ENCODE measurements at regions of chr10 and their contacts with region 1.

Region 1: DNA sequence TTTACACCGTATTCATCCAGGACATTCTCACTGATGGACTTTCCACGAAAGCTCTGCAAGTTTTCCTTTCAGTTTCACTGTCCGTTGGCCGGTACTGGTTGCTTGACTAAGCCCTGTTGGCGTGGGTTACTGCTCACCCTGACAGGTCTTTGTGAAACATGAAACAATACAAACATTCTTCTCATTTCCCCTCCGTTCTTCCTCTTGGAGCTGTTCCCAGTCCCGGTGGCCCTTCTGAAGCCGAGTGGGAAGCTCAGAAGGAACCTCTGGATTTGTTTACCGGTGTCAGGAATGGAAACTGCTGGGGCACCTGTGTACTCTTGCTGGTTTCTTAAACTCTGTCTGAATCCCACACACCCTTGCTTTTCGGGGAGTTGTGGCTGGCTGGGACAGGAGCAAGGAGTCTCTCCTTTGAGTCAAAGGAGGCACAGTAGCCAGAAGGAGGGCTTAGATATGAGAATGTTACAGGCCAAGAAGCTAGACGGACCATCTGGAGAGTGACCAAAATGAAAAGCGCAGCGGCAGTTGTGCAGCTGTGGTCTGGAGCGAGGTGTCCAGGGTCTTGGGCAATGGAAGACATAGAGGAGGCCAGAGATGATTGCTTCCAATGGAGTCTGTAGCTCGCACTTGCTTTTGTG is 45.7 kb downstream of the LYZL2 start:
- DNase-seq: peak; percentile 74 to 89
- ATAC-seq: peak; percentile 91 to 94
- H3K4me3 ChIP-seq: peak overlapping the region; percentile 29
- H3K27ac ChIP-seq: peak overlapping the region; percentile 72 to 88
- H3K4me1 ChIP-seq: peaks cover 35% of the 10 kb centered on the region
- CTCF ChIP-seq: no peak
- EP300 ChIP-seq: peak in 1 of 2 experiments; percentile 64; a peak in 1 of 5 replicates
- POLR2A ChIP-seq: no peak
- RAD21 ChIP-seq: 0 out of 5 replicates have a peak, but pooled peaks of 1 of the 2 experiments have one; percentile 22

Region 2: DNA sequence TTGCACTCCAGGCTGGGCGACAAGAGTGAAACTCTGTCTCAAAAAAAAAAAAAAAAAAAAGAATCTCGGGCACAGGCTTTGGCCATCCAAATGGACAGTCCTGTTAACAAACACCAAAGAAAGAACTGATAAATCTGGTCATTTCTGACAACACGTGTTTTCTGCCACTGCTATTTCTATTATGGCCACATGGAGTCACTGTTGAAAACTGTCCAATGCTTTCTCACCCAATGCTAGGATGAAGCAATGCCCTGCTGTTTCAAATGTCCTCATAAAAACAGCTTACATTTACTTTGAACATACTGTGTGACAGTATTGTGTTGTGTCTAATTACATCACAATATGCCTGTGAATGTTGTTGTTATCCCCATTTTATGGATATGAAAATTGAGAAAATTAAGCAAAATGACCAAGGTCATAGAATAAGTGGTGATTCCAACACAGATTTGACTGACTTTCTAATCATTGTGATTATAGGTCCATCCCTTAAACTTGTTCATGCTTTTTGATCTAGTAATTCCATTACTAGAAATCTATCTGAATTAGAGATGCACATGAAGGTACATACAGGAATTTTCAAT is 169.8 kb before region 1 on chr10:
- CTCF ChIA-PET with region 1: interaction called, 12 read pairs
- POLR2A ChIA-PET with region 1: no interaction called
- DNase-seq: peak; percentile 80 to 84
- ATAC-seq: peak; percentile 80 to 85
- H3K4me3 ChIP-seq: no peak overlapping the region
- H3K27ac ChIP-seq: peak overlapping the region; percentile 27 to 63; a peak in 4 of 6 replicates
- H3K4me1 ChIP-seq: peaks cover 17% of the 10 kb centered on the region
- CTCF ChIP-seq: peak; percentile 76
- EP300 ChIP-seq: no peak
- POLR2A ChIP-seq: no peak
- RAD21 ChIP-seq: peak; percentile 84

Region 3: DNA sequence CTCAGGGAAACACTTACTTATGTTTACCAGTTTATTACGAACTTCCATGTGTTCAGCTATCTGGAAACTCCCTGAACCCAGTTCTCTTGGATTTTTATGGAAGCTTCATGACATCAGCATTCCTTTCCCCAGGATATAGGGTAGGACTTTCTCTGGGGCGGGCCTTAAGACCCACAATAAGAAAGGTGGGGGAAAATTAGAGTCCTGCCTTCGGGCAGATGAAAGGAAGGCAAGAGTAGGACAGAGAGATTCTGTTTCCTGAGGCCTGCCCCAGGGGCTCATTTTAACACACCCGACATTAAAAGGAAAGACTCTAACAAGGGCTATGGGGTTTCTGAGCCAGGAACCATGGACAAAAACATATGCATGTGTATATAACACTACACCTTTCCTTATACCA is 64.3 kb before region 1 on chr10:
- CTCF ChIA-PET with region 1: interaction called, 20 read pairs
- POLR2A ChIA-PET with region 1: no interaction called
- DNase-seq: no peak
- ATAC-seq: no peak
- H3K4me3 ChIP-seq: no peak overlapping the region
- H3K27ac ChIP-seq: peak overlapping the region in 1 of 2 experiments; percentile 92; a peak in 3 of 6 replicates
- H3K4me1 ChIP-seq: peaks cover 23% of the 10 kb centered on the region; the same call in 2 of the 3 replicates
- CTCF ChIP-seq: no peak
- EP300 ChIP-seq: no peak
- POLR2A ChIP-seq: no peak
- RAD21 ChIP-seq: no peak

Region 4: GRCh38 chr10:30534465-30535144 is 49.3 kb before region 1 on chr10:
- CTCF ChIA-PET with region 1: interaction called, 37 read pairs
- POLR2A ChIA-PET with region 1: interaction called, 13 read pairs
- DNase-seq: peak; percentile 61 to 85
- ATAC-seq: peak; percentile 41 to 58; a peak in 3 of 6 replicates
- H3K4me3 ChIP-seq: no peak overlapping the region
- H3K27ac ChIP-seq: peak overlapping the region; percentile 78 to 88
- H3K4me1 ChIP-seq: peaks cover 61% of the 10 kb centered on the region
- CTCF ChIP-seq: peak; percentile 84
- EP300 ChIP-seq: no peak
- POLR2A ChIP-seq: no peak
- RAD21 ChIP-seq: peak; percentile 89 to 91

Region 5: DNA sequence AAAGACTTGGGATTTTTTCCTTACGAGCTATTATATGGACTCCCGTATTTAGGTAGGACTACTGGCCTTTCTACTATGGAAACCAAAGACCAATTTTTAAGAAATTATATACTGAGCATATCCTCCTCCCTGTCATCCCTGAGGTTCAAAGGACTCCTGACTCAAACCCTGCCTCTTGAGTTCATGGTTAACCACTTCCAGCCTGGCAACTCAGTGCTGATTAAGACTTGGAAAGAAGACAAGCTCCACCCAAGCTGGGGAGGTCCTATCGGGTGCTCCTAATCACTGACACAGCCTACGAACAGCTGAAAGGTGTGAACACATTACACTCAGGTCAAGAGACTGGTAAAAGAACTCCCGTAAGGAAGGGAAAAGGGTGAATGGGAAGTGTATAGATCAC is 21.1 kb before region 1 on chr10:
- CTCF ChIA-PET with region 1: interaction called, 32 read pairs
- POLR2A ChIA-PET with region 1: no interaction called
- DNase-seq: no peak
- ATAC-seq: no peak
- H3K4me3 ChIP-seq: no peak overlapping the region
- H3K27ac ChIP-seq: peak overlapping the region in 1 of 2 experiments; percentile 47; a peak in 3 of 6 replicates
- H3K4me1 ChIP-seq: peaks cover 14% of the 10 kb centered on the region
- CTCF ChIP-seq: no peak
- EP300 ChIP-seq: no peak
- POLR2A ChIP-seq: no peak
- RAD21 ChIP-seq: no peak

Region 6: DNA sequence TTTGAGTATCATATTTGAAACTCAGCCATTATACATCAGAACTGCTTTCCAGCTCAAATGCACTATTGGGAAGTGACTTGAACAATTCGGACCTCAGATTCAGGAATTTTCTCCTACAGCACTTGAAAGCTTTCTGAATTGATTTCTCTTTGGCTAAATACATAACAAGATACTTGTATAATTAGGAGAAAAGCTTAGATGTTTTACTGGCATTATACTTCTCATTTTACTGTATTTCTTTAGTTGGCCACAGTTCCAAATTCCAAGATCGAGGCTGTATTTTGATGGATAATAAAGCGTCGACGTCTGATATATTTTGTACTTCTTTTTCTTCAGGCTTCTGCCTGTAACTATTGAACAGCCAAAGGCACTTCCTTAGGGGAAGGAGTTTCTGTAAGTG is 72.3 kb after region 1 on chr10:
- CTCF ChIA-PET with region 1: no interaction called
- POLR2A ChIA-PET with region 1: no interaction called
- DNase-seq: no peak
- ATAC-seq: no peak
- H3K4me3 ChIP-seq: no peak overlapping the region
- H3K27ac ChIP-seq: no peak overlapping the region
- H3K4me1 ChIP-seq: no peaks in the 10 kb centered on the region
- CTCF ChIP-seq: no peak
- EP300 ChIP-seq: no peak
- POLR2A ChIP-seq: no peak
- RAD21 ChIP-seq: no peak

Measured in A549 (cell line).